ENCODE measurements at regions of chr1 and their contacts with region 1.

Region 1: GRCh38 chr1:53220171-53220961 is at the start of gene CZIB:
- DNase-seq: peak; percentile 97 to 99
- ATAC-seq: peak; percentile 99
- H3K4me3 ChIP-seq: peak within 1 kb of the TSS; percentile 37 to 83
- H3K27ac ChIP-seq: peak within 1 kb of the TSS; percentile 9 to 99
- H3K4me1 ChIP-seq: no peaks in the 10 kb centered on the region
- H3K27me3 ChIP-seq: no peaks in the 10 kb centered on the region
- total RNA-seq, gene CZIB: 45.6 to 66.5 TPM

Region 2: GRCh38 chr1:52856026-52856425 is 364.3 kb before region 1 on chr1:
- intact Hi-C with region 1: no loop called
- DNase-seq: no peak
- ATAC-seq: no peak
- H3K4me3 ChIP-seq: no peak overlapping the region
- H3K27ac ChIP-seq: no peak overlapping the region
- H3K4me1 ChIP-seq: no peaks in the 10 kb centered on the region
- H3K27me3 ChIP-seq: no peaks in the 10 kb centered on the region

Region 3: GRCh38 chr1:53196485-53197270 is 23.7 kb before region 1 on chr1 and contains the start of gene CPT2:
- intact Hi-C with region 1: loop called in 1 of 2 experiments (anchors 1 kb)
- DNase-seq: peak; percentile 98
- ATAC-seq: peak; percentile 99
- H3K4me3 ChIP-seq: peak within 1 kb of the TSS; percentile 70 to 84
- H3K27ac ChIP-seq: peak within 1 kb of the TSS; percentile 92 to 96
- H3K4me1 ChIP-seq: no peaks in the 10 kb centered on the region
- H3K27me3 ChIP-seq: no peaks in the 10 kb centered on the region
- total RNA-seq, gene CPT2: 9.2 to 10.5 TPM

Region 4: DNA sequence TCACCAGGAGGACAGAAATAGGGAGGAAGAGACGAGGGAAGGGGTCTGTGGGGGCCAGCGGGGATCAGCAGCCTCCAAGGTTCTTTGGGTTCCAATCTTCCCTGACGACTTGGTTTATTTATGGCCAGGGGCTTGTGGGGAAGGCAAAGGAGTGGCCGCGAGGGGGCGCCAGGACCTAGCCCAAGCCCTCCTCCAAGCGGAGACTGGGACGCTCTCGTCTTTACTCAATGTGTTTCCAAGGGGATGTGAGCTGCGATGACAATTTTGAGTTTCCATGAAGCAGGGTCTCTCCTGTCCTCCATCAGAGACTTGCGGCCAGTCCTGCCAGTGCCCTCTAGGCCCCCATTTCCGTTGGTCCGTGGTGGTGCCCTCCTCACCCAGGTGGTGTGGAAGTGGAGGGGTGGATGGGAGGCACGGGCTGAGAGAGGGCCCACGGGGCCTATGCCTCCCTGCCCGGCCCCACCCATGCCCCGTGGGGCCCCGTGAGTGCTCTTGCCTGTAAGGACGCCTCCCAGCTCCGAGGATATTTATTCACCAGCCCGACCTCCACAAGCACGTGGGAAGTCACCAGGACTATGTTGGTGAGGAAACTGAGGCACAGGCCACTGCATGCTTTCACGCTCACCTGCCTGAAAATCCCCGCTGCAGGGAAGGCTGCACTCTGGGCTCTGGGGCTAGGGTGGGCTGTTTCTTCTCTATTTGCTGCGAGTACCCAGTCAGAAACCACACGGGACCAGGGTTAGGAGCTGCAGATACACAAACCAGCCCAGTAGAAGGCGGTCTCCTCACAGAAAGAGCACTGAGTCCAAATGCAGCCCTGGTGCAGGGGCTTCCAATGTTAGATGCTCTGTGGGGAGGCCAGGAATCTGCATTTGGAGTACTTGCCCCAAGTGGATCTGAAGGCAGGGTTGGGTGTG is 265.4 kb after region 1 on chr1:
- intact Hi-C with region 1: no loop called
- DNase-seq: peak; percentile 80 to 93
- ATAC-seq: peak; percentile 80
- H3K4me3 ChIP-seq: no peak overlapping the region
- H3K27ac ChIP-seq: no peak overlapping the region
- H3K4me1 ChIP-seq: no peaks in the 10 kb centered on the region
- H3K27me3 ChIP-seq: no peaks in the 10 kb centered on the region

Measured in aorta (tissue), 5 donors.